ENCODE measurements at regions of chr17 and their contacts with region 1.

Region 1: GRCh38 chr17:51537996-51538550 is 277.7 kb downstream of the UTP18 start:
- ATAC-seq: no peak
- H3K4me3 ChIP-seq: no peak overlapping the region
- H3K27ac ChIP-seq: no peak overlapping the region
- H3K4me1 ChIP-seq: peaks cover 0 to 1% of the 10 kb centered on the region in 2 donors

Region 2: GRCh38 chr17:51319186-51319585 is 218.9 kb before region 1 on chr17:
- in situ Hi-C with region 1: loop called in 1 of 9 experiments (anchors 10 kb)
- ATAC-seq: no peak
- H3K4me3 ChIP-seq: no peak overlapping the region
- H3K27ac ChIP-seq: no peak overlapping the region
- H3K4me1 ChIP-seq: no peaks in the 10 kb centered on the region